AG04450 (cell line): ENCODE measurements at regions of chr20 and their contacts with region 1.

Region 1: DNA sequence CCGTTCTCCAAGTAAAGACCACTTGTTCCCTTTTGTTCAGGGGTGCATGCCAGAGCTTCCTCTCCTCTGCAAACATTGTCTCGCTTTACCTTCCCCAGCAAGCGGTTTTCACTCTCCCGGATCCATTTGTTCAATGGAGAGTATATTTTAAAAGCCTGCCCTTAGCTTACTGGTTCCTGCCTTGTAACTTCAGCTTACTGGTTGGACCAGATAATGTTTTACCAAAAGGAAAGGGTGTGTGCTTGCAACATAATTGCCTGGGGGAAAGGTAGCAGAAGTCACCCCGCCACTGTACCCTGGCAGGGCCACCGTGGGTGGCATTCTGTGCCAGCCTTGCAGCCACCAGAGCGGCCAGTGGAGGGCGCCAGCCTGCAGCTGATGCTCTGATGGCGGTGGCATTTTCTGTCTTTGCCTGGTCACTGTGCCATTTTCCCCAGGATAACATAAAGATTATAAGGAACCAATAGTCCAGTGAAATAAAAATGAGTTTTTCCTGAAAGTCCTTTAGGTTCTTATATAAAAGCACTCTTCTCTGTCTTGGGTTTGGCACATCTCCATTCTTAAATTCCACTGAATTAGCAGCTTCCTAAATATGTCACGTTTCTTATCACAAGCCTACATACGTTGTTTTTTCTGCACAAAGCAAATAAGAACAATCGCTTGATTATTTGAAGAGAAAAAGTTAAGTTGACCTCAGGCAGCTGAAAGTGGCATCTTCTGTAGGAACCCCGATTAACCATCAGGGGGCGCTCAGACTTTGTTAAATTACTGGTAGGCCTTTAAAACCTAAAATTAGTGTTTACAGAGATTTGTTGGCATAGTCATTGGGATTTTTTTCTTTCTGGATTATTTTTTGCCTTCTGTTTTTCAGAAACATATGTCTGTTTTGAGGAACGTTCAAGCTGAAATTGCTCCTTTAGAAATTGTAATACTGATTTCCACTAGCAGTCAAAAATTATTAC is 67.4 kb upstream of the XRN2 start:
- DNase-seq: peak; percentile 32
- H3K4me3 ChIP-seq: no peak overlapping the region
- H3K27ac ChIP-seq: no peak overlapping the region
- H3K27me3 ChIP-seq: no peaks in the 10 kb centered on the region
- CTCF ChIP-seq: peak; percentile 77

Region 2: DNA sequence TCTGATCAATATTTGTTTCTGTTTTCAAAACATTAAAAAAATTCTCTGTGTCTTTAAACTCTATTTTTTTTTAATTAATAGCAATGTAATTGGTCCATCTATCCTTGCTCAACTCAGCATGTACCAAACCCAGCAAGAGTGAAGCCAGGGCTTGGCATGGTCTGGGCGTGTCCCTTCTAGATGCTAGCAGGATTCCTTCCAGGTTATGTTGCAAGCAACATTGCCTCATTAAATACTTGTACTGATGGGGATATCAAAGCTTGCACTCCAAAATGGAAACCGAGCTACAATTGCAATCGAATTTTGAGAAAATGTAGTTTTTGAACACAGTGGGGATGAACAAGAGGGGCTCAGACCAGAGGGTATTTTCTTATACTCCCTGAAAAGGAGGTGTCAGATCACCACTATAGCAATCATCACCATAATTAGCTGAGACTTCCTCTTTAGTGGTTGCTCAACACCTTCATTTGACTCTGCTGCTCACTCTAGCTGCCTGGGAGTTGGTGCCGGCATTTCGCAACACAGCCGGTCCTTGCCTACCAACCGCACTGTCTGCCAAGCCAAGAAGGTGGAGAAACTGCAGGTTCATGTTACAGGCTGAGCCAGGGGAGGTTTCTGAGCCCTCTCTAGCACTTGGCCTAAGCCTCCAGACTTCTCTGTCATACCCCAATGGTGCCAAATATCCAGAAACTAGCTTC is 455.5 kb before region 1 on chr20:
- CTCF ChIA-PET with region 1: no interaction called
- POLR2A ChIA-PET with region 1: no interaction called
- DNase-seq: no peak
- H3K4me3 ChIP-seq: no peak overlapping the region
- H3K27ac ChIP-seq: no peak overlapping the region
- H3K27me3 ChIP-seq: no peaks in the 10 kb centered on the region
- CTCF ChIP-seq: no peak

Region 3: GRCh38 chr20:20860078-20860806 is 375.5 kb before region 1 on chr20:
- CTCF ChIA-PET with region 1: interaction called, 26 read pairs
- POLR2A ChIA-PET with region 1: no interaction called
- DNase-seq: peak; percentile 36
- H3K4me3 ChIP-seq: no peak overlapping the region
- H3K27ac ChIP-seq: no peak overlapping the region
- H3K27me3 ChIP-seq: no peaks in the 10 kb centered on the region
- CTCF ChIP-seq: peak; percentile 84

Region 4: GRCh38 chr20:21219686-21220085 is 16.1 kb before region 1 on chr20:
- CTCF ChIA-PET with region 1: interaction called, 66 read pairs
- POLR2A ChIA-PET with region 1: no interaction called
- DNase-seq: no peak
- H3K4me3 ChIP-seq: no peak overlapping the region
- H3K27ac ChIP-seq: no peak overlapping the region
- H3K27me3 ChIP-seq: no peaks in the 10 kb centered on the region
- CTCF ChIP-seq: no peak

Region 5: DNA sequence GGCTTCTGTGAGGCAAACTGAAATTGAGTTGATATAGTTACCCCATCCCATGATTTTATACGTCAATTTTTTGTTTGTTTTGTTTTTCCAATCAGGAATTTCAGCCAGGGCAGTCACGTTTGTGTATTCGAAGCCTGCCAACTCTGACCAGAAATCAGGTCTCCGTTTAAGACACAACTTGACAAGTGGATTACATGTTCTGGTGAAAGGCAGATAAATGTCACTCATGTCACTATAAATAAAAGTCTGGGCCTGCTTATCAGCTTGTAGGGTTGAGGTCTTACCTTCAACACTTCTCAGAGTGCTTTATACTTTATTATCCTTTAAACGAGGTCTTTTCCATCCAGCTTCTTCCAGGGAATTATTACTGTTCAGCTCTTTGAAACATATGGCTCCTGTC is 59.0 kb after region 1 on chr20:
- CTCF ChIA-PET with region 1: interaction called, 10 read pairs
- POLR2A ChIA-PET with region 1: no interaction called
- DNase-seq: no peak
- H3K4me3 ChIP-seq: no peak overlapping the region
- H3K27ac ChIP-seq: no peak overlapping the region
- H3K27me3 ChIP-seq: peaks cover 12% of the 10 kb centered on the region
- CTCF ChIP-seq: no peak

Region 6: GRCh38 chr20:21352703-21353102 is 116.9 kb after region 1 on chr20:
- CTCF ChIA-PET with region 1: interaction called, 12 read pairs
- POLR2A ChIA-PET with region 1: no interaction called
- DNase-seq: peak; percentile 32
- H3K4me3 ChIP-seq: no peak overlapping the region
- H3K27ac ChIP-seq: no peak overlapping the region
- H3K27me3 ChIP-seq: no peaks in the 10 kb centered on the region
- CTCF ChIP-seq: 0 out of 2 replicates have a peak, but pooled peaks have one; percentile 18

Region 7: GRCh38 chr20:21490095-21490494 is 254.3 kb after region 1 on chr20:
- CTCF ChIA-PET with region 1: interaction called, 107 read pairs
- POLR2A ChIA-PET with region 1: no interaction called
- DNase-seq: no peak
- H3K4me3 ChIP-seq: no peak overlapping the region
- H3K27ac ChIP-seq: no peak overlapping the region
- H3K27me3 ChIP-seq: peaks cover 4% of the 10 kb centered on the region
- CTCF ChIP-seq: peak; percentile 53

Region 8: DNA sequence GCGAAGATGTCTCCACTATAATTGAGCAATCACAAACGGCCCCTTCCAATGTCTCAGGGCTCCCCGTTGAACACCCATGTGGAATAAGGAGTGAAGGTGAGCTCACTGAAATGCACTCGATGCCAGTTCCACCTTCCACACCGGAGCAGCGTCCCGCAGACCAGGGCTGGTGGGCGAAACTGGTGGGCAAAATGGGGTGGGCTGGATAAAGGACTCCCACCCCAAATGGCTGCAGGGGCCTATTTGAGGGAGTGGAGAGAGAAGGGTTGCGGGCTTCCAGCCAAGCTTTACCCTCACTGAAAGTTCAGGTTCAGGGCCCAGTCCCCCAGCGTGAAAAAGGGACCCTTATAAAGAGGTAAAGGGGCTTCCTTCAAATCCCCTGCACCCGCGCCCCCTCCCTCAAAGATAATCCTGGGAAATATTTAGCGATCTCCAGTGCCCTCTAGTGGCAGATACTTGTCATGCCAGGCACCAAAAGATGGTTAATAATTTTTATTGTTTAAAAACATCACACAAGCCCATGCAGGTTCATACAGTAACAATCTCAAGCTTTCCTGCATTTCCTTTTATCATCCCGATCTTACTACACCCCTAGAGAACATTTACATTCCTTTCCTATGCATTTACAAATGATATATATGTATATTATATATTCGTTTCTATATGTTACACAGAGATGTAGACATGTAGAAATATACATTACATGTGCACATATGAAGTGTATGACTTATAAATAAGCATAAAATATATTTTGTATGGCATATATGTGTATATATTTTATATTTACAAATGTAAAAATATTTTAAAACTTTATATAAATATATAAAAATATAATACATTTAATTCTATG is 336.3 kb after region 1 on chr20:
- CTCF ChIA-PET with region 1: interaction called, 33 read pairs
- POLR2A ChIA-PET with region 1: no interaction called
- DNase-seq: no peak
- H3K4me3 ChIP-seq: no peak overlapping the region
- H3K27ac ChIP-seq: no peak overlapping the region
- H3K27me3 ChIP-seq: no peaks in the 10 kb centered on the region
- CTCF ChIP-seq: peak; percentile 83